ENCODE measurements at regions of chr7 and their contacts with region 1.

Region 1: DNA sequence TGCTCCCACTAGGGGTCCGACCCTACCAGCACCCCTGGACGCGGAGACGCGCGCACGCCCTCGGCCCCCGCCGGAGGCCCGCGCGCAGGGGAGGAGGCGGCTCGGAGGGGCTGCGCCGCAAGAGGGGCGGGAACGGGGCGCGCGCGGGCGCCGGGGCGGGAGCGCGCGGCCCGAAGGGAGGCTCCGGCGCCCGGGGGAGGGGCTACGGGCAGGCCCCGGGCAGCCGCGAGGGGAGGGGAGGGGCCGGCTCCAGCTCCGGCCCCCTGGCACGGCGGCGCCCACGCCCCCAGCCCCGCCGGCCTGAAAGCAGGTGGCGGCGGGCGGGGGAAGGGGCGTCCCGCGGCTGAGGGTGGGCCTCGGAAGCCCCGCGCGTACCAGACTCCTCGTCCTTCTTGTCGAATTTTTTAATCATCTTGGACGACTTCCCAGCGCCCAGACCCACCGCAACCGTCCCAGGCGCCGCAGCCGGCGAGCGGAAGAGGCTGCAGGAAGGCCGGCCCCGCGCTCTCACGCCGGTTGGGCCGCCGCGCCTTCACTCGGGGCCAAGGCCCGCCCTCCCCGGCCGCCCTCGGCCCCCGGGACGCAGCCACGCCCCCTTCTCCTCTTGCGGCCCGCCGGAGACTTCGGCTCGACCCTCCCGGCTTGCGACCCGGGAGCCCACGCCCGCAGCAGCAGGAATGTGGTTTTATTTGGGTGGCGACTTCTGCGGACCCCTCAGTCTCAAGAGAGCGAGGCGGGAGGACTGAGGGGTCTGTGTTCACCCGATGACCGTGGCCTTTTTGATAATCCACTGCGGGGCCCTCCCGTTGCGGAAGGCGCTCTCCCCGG is at the start of gene COPG2:
- DNase-seq: peak; percentile 89 to 92
- ATAC-seq: peak; percentile 99 to 100 (median 99)
- H3K4me3 ChIP-seq: peak within 1 kb of the TSS; percentile 94
- H3K27ac ChIP-seq: peak within 1 kb of the TSS; percentile 91
- H3K4me1 ChIP-seq: peaks cover 6% of the 10 kb centered on the region
- H3K27me3 ChIP-seq: no peaks in the 10 kb centered on the region
- CTCF ChIP-seq: no peak
- total RNA-seq, gene COPG2: 13.2 to 21.5 (median 18.3) TPM

Region 2: DNA sequence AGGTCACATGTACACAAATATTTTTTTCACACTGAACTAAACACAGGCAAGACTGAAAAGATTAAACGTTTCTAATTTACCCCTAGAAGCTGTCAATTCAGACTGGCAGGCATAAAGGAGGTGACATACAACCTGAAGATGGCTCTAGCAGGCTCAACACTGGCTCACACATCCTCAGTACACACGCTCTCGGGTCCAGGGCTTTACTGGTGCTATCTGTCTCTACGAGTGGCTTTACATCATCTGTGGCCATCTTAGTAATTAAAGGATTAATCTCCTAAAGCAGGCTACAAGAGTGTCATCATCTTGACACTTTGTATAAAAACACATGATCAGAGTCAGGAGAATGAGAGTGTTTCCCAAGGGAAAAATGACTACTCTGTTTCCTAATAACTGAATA is 57.3 kb before region 1 on chr7:
- intact Hi-C with region 1: no loop called
- DNase-seq: no peak
- ATAC-seq: no peak
- H3K4me3 ChIP-seq: no peak overlapping the region
- H3K27ac ChIP-seq: no peak overlapping the region
- H3K4me1 ChIP-seq: no peaks in the 10 kb centered on the region
- H3K27me3 ChIP-seq: no peaks in the 10 kb centered on the region
- CTCF ChIP-seq: no peak

Region 3: DNA sequence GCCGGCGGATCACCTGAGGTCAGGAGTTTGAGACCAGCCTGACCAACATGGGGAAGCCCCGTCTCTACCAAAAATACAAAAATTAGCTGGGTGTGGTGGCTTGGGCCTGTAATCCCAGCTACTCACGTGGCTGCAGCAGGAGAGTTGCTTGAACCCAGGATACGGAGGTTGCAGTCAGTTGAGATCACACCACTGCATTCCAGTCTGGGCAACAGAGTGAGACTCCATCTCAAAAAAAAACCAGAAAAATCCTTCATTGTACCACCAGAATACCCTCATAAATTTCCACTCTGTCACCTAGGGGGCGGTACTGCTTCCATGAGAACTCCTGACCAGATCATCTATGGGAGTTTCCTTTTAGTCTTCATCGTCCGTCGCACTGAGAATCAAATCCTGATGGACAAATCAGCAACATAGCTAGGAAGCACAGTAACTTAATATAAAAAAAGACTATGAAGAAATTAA is 291.3 kb after region 1 on chr7:
- intact Hi-C with region 1: loop called in 1 of 2 experiments (anchors 10 kb)
- DNase-seq: no peak
- ATAC-seq: no peak
- H3K4me3 ChIP-seq: no peak overlapping the region
- H3K27ac ChIP-seq: peak overlapping the region; percentile 47
- H3K4me1 ChIP-seq: peaks cover 53% of the 10 kb centered on the region
- H3K27me3 ChIP-seq: no peaks in the 10 kb centered on the region
- CTCF ChIP-seq: no peak

Region 4: GRCh38 chr7:131212114-131212513 is 543.6 kb after region 1 on chr7:
- intact Hi-C with region 1: no loop called
- DNase-seq: no peak
- ATAC-seq: no peak
- H3K4me3 ChIP-seq: no peak overlapping the region
- H3K27ac ChIP-seq: no peak overlapping the region
- H3K4me1 ChIP-seq: peaks cover 6% of the 10 kb centered on the region
- H3K27me3 ChIP-seq: no peaks in the 10 kb centered on the region
- CTCF ChIP-seq: no peak

Measured in psoas muscle (tissue), 8 donors.